Activated naive CD4-positive, alpha-beta T cell treated with anti-CD3 and anti-CD28 coated beads, Interleukin-2, amount 10 ng/mL, durations not matched to agents 7 days and 5 days (primary cell): ENCODE measurements at regions of chr19 and their contacts with region 1.

Region 1: GRCh38 chr19:48588670-48589399 is 17.7 kb upstream of the SPACA4 start:
- DNase-seq: peak; percentile 92
- H3K4me3 Mint-ChIP-seq: peak overlapping the region; percentile 82
- H3K27ac Mint-ChIP-seq: peak overlapping the region; percentile 89
- H3K4me1 Mint-ChIP-seq: peaks cover 29% of the 10 kb centered on the region
- H3K27me3 Mint-ChIP-seq: peaks cover 43% of the 10 kb centered on the region

Region 2: DNA sequence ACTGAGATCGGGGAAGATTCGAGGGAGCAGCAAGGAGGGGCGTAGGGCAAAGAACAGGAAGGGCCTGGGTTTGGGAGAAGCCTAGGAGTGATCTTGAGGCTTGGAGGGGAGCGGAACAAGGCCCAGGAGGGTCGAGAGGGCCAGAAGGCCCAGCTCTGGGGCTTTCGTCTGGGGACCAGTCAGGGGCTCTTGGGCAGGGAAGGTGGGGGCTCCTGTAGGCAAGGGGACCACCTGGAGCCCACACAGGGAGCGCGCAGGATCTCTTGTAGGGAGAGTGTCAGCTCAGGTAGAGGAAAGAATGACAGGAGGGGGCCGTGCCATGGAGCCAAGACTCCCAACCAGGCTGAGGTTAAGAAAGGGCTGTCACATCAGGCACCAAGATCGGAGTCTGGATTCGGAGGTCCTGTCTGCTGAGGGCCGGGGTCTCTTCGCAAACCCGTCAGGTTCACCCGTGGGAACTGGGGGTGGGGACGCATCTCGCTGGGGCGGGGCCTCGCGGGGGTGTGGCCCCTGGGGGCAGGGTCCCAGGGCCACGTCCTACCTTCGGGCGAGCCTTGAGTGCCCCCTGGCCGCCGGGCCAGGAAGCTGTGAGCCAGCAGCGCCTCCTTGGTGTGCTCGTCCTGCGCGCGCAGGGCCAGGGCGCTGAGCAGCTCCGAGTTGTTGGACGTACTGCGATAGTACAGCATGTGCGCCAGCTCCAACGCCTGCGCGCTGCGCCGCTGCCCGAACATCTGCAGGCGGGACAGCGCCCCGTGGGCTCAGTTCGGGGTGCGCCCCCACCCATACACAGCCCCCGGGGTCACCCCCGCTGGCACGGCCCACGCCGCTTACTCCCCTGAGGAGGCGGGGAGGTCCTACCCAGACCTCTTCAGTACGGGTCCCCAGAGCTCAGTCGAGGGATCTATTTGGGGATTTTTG is 255.1 kb before region 1 on chr19:
- CTCF ChIA-PET with region 1: interaction called, 11 read pairs
- DNase-seq: peak; percentile 96
- H3K4me3 Mint-ChIP-seq: peak overlapping the region; percentile 90
- H3K27ac Mint-ChIP-seq: peak overlapping the region; percentile 96
- H3K4me1 Mint-ChIP-seq: peaks cover 49% of the 10 kb centered on the region
- H3K27me3 Mint-ChIP-seq: no peaks in the 10 kb centered on the region

Region 3: DNA sequence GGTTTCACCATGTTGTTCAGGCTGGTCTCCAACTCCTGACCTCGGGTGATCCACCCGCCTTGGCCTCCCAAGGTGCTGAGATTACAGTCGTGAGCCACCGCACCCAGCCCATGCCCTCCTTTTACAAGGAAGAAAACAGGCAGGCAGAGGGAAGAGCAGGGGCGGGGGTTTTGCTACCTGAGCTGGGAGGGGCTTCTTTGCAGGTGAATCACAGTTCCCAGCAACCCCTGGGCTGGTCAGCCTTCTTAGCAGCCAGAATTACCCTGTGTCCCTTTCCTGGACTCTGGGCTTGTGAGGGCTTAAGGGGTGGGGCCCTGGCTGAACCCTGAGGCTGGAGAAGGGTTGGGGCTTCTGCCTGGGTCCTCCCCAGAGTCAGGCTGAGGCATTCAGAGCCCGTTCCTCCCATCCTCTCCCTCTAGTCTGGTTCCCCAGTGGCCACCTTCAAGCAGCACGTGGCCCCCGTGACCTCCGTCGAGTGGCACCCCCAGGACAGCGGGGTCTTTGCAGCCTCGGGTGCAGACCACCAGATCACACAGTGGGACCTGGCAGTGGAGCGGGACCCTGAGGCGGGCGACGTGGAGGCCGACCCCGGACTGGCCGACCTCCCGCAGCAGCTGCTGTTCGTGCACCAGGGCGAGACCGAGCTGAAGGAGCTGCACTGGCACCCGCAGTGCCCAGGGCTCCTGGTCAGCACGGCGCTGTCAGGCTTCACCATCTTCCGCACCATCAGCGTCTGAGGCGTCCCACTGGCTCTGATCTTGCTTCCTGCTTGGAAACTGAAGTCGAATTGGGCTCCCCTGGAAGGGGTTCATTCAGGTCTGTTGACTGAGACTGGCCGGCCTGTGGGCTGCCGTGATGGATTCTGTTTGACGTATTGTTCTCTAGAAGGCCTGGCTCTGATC is 136.3 kb before region 1 on chr19:
- CTCF ChIA-PET with region 1: no interaction called
- DNase-seq: no peak
- H3K4me3 Mint-ChIP-seq: no peak overlapping the region
- H3K27ac Mint-ChIP-seq: no peak overlapping the region
- H3K4me1 Mint-ChIP-seq: peaks cover 8% of the 10 kb centered on the region
- H3K27me3 Mint-ChIP-seq: no peaks in the 10 kb centered on the region

Region 4: GRCh38 chr19:48489608-48490216 is 99.1 kb before region 1 on chr19:
- CTCF ChIA-PET with region 1: interaction called, 78 read pairs
- DNase-seq: peak; percentile 86
- H3K4me3 Mint-ChIP-seq: no peak overlapping the region
- H3K27ac Mint-ChIP-seq: no peak overlapping the region
- H3K4me1 Mint-ChIP-seq: peaks cover 38% of the 10 kb centered on the region
- H3K27me3 Mint-ChIP-seq: peaks cover 61% of the 10 kb centered on the region

Region 5: GRCh38 chr19:48510421-48511280 is 78.2 kb before region 1 on chr19:
- CTCF ChIA-PET with region 1: interaction called, 138 read pairs
- DNase-seq: peak; percentile 86
- H3K4me3 Mint-ChIP-seq: peak overlapping the region; percentile 77
- H3K27ac Mint-ChIP-seq: no peak overlapping the region
- H3K4me1 Mint-ChIP-seq: peaks cover 16% of the 10 kb centered on the region
- H3K27me3 Mint-ChIP-seq: peaks cover 14% of the 10 kb centered on the region

Region 6: GRCh38 chr19:48518207-48518606 is 70.6 kb before region 1 on chr19:
- CTCF ChIA-PET with region 1: interaction called, 10 read pairs
- DNase-seq: no peak
- H3K4me3 Mint-ChIP-seq: no peak overlapping the region
- H3K27ac Mint-ChIP-seq: no peak overlapping the region
- H3K4me1 Mint-ChIP-seq: peaks cover 6% of the 10 kb centered on the region
- H3K27me3 Mint-ChIP-seq: peaks cover 4% of the 10 kb centered on the region

Region 7: GRCh38 chr19:48573163-48573505 is 15.7 kb before region 1 on chr19:
- CTCF ChIA-PET with region 1: interaction called, 14 read pairs
- DNase-seq: no peak
- H3K4me3 Mint-ChIP-seq: no peak overlapping the region
- H3K27ac Mint-ChIP-seq: no peak overlapping the region
- H3K4me1 Mint-ChIP-seq: no peaks in the 10 kb centered on the region
- H3K27me3 Mint-ChIP-seq: peaks cover 8% of the 10 kb centered on the region

Region 8: GRCh38 chr19:48608798-48609263 is 20.0 kb after region 1 on chr19:
- CTCF ChIA-PET with region 1: interaction called, 35 read pairs
- DNase-seq: peak; percentile 75
- H3K4me3 Mint-ChIP-seq: no peak overlapping the region
- H3K27ac Mint-ChIP-seq: peak overlapping the region; percentile 77
- H3K4me1 Mint-ChIP-seq: peaks cover 5% of the 10 kb centered on the region
- H3K27me3 Mint-ChIP-seq: no peaks in the 10 kb centered on the region